Activated B cell treated with CpG ODN at 0.5 μM for 24 hours (primary cell): ENCODE measurements at regions of chr16 and their contacts with region 1.

Region 1: GRCh38 chr16:69754469-69755310 is at the start of gene NOB1:
- DNase-seq: peak; percentile 94
- ATAC-seq: peak; percentile 96
- H3K4me3 Mint-ChIP-seq: peak within 1 kb of the TSS; percentile 100
- H3K27ac Mint-ChIP-seq: peak within 1 kb of the TSS; percentile 99
- H3K4me1 Mint-ChIP-seq: peaks cover 26% of the 10 kb centered on the region
- H3K27me3 Mint-ChIP-seq: peaks cover 3% of the 10 kb centered on the region
- CTCF ChIP-seq: peak; percentile 89
- total RNA-seq, gene NOB1: 76.1 and 78.8 TPM in 2 replicates

Region 2: GRCh38 chr16:69105489-69106361 is 649.0 kb before region 1 on chr16 and contains the start of gene HAS3:
- CTCF ChIA-PET with region 1: no interaction called
- POLR2A ChIA-PET with region 1: no interaction called
- intact Hi-C with region 1: no loop called
- DNase-seq: peak; percentile 38
- ATAC-seq: peak; percentile 71
- H3K4me3 Mint-ChIP-seq: peak within 1 kb of the TSS; percentile 86
- H3K27ac Mint-ChIP-seq: peak within 1 kb of the TSS; percentile 66
- H3K4me1 Mint-ChIP-seq: peaks cover 18% of the 10 kb centered on the region
- H3K27me3 Mint-ChIP-seq: peaks cover 34% of the 10 kb centered on the region
- CTCF ChIP-seq: no peak
- total RNA-seq, gene HAS3: 0.71 and 0.82 TPM in 2 replicates

Region 3: DNA sequence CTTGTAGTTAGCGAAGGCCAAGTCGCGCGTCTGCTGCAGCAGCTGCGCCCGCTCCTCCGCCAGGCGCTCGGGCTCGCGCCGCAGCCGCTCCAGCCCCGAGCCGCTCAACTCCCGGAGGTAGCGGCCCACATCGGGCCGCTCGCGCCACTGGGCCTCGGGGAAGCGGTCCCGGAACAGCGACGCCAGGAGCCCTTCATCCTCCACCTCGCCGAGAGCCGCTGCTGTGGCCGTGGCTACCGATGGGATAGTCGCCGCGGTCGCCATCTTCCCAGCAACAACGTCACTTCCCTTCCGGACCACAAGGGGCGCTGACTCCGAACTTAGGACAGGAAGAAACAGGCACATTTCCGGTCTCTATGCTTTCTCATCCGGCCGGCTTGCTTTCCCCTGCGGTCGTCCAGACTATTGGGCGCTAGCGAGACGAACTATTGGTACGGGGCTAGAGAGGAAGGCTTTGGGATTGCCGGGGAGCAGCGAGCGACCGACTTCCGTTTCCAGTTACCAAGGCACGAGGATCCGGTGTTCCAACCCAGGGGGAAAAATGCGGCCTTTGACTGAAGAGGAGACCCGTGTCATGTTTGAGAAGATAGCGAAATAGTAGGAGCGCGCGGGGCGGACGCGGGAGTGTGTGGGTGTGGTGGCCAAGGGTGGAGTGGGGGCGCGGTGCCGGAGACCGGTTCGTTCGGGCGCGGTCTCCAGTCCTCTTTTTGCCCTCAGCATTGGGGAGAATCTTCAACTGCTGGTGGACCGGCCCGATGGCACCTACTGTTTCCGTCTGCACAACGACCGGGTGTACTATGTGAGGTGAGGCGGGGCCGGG is 415.2 kb before region 1 on chr16 and contains the starts of genes COG8 and NIP7:
- CTCF ChIA-PET with region 1: interaction called, 3 read pairs
- POLR2A ChIA-PET with region 1: interaction called, 4 read pairs
- intact Hi-C with region 1: loop called (anchors 1 kb)
- DNase-seq: peak; percentile 87
- ATAC-seq: peak; percentile 91
- H3K4me3 Mint-ChIP-seq: peak within 1 kb of the TSS; percentile 100
- H3K27ac Mint-ChIP-seq: peak within 1 kb of the TSS; percentile 99
- H3K4me1 Mint-ChIP-seq: peaks cover 39% of the 10 kb centered on the region
- H3K27me3 Mint-ChIP-seq: no peaks in the 10 kb centered on the region
- CTCF ChIP-seq: no peak
- total RNA-seq, gene COG8: 40.5 and 45.4 TPM in 2 replicates
- total RNA-seq, gene NIP7: 42.4 and 44.3 TPM in 2 replicates

Region 4: DNA sequence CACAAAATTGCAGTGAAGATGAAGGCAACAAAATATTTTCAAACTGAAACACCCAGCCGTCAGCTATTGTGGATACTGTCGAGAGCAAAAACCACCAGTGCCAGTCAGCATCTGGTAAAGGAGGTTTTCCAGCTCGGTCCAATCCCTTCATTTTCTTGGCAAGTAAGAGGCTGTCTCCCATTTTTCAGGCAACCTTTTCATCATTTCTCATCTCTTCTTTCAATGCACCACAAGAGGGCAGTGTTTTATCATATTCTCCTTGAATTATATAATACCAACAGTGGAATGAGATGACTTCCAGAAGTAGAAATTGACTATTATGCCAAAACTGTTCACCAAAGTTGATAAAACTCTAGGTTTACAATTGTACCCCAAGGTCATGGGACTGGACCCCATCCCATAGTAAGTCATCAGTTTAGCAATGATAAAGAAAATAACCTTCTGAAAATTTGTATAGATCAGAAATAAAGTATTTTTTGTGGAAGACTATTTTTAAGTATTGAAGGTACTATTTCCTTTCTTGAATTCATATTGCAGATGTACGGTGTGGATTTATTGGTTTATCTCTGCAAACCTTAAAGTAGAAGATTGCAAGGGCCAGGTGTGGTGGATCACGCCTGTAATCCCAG is 45.1 kb before region 1 on chr16:
- CTCF ChIA-PET with region 1: interaction called, 46 read pairs
- POLR2A ChIA-PET with region 1: interaction called, 12 read pairs
- intact Hi-C with region 1: loop called (anchors 1 kb)
- DNase-seq: no peak
- ATAC-seq: no peak
- H3K4me3 Mint-ChIP-seq: no peak overlapping the region
- H3K27ac Mint-ChIP-seq: no peak overlapping the region
- H3K4me1 Mint-ChIP-seq: no peaks in the 10 kb centered on the region
- H3K27me3 Mint-ChIP-seq: no peaks in the 10 kb centered on the region
- CTCF ChIP-seq: peak; percentile 54

Region 5: DNA sequence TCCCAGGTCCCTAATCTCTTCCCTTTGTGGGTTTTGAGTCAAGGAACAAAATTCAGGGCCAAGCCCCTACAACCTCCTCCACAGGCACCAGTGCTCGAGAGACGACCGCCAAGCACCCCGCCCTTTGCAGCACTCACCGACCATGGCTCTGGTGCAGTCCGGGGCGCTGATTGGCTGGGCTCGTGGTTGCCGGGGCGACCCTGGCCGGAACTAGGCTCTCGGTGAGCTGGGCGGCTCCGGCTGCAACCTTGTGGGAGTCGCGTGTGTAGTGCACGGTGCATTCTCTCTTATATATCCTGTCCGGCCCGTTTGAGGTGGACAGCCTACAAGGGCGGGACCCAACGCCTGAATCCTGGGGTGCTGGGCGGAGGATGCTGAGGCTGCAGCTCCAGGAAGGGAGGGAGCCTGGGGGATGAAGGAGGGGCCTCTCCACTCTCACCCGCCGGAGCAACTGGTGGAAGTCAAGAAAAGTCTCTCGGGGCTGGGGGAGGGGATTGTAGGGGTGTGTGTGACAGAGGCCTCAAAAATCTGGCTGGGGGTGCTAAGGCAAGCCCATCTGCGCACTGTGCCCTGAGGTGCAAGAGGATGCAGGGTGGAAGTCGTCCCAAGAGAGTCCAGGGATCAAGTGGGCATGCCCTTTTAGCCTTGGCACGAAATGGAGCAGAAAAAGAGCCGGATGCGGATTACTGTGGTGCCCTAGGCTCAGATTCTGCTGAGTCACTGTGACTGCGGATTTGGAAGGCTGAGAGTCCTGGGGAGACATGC is 28.2 kb before region 1 on chr16 and contains the start of gene NQO1:
- CTCF ChIA-PET with region 1: interaction called, 12 read pairs
- POLR2A ChIA-PET with region 1: interaction called, 38 read pairs
- intact Hi-C with region 1: loop called (anchors 1 kb)
- DNase-seq: peak; percentile 81
- ATAC-seq: peak; percentile 99
- H3K4me3 Mint-ChIP-seq: peak within 1 kb of the TSS; percentile 95
- H3K27ac Mint-ChIP-seq: peak within 1 kb of the TSS; percentile 94
- H3K4me1 Mint-ChIP-seq: peaks cover 29% of the 10 kb centered on the region
- H3K27me3 Mint-ChIP-seq: no peaks in the 10 kb centered on the region
- CTCF ChIP-seq: no peak
- total RNA-seq, gene NQO1: 5.4 and 5.5 TPM in 2 replicates

Region 6: DNA sequence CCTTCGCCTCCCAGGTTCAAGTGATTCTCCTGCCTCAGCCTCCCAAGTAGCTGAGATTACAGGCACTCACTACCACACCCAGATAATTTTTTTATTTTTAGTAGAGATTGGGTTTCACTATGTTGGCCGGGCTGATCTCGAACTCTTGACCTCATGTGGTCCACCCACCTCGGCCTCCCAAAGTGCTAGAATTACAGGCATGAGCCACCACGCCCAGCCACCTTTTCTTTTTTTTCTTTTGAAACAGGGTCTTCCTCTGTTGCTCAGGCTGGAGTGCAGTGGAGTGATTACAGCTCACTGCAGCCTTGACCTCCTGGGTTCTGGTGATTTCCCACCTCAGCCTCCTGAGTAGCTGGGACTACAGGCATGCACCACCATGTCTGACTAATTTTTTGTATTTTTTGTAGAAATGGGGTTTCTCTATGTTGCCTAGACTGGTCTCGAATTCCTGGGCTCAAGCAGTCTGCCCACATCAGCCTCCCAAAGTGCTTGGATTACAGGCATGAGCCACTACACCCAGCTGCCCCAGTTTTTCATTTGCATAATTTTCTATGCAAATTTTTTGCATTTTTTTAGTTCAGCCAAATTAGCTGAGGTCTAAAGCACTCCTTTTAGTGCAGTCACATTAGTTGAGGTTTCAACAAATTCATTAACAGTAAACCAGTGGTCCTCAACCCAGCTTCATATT is 18.7 kb after region 1 on chr16:
- CTCF ChIA-PET with region 1: interaction called, 9 read pairs
- POLR2A ChIA-PET with region 1: interaction called, 23 read pairs
- intact Hi-C with region 1: no loop called
- DNase-seq: no peak
- ATAC-seq: peak; percentile 56
- H3K4me3 Mint-ChIP-seq: no peak overlapping the region
- H3K27ac Mint-ChIP-seq: peak overlapping the region; percentile 56
- H3K4me1 Mint-ChIP-seq: peaks cover 55% of the 10 kb centered on the region
- H3K27me3 Mint-ChIP-seq: no peaks in the 10 kb centered on the region
- CTCF ChIP-seq: no peak